ENCODE measurements at regions of chr5 and their contacts with region 1.

Region 1: GRCh38 chr5:177607452-177608192 is 7.7 kb downstream of the B4GALT7 start:
- DNase-seq: peak; percentile 86 to 92
- H3K4me3 ChIP-seq: no peak overlapping the region; a peak in 1 of 8 replicates
- H3K27ac ChIP-seq: peak overlapping the region; percentile 61; the same call in 1 of the 2 replicates
- H3K4me1 ChIP-seq: peaks cover 0 to 17% (median 10%) of the 10 kb centered on the region in 4 experiments; a peak in 5 of 7 replicates
- H3K27me3 ChIP-seq: no peaks in the 10 kb centered on the region
- CTCF ChIP-seq: peak in 2 of 3 experiments; percentile 79 to 94; a peak in 3 of 4 replicates
- EP300 ChIP-seq: no peak
- POLR2A ChIP-seq: 0 out of 3 replicates have a peak, but pooled peaks of 1 of the 2 experiments have one; percentile 56
- RAD21 ChIP-seq: peak; percentile 81 to 84

Region 2: GRCh38 chr5:177425801-177426565 is 181.6 kb before region 1 on chr5:
- CTCF ChIA-PET with region 1: no interaction called
- POLR2A ChIA-PET with region 1: no interaction called
- DNase-seq: peak; percentile 97 to 100
- H3K4me3 ChIP-seq: peak overlapping the region; percentile 52 to 71 (median 64)
- H3K27ac ChIP-seq: peak overlapping the region; percentile 86; the same call in 1 of the 2 replicates
- H3K4me1 ChIP-seq: peaks cover 4 to 14% (median 9%) of the 10 kb centered on the region in 4 experiments; a peak in 6 of 7 replicates
- H3K27me3 ChIP-seq: no peaks in the 10 kb centered on the region
- CTCF ChIP-seq: no peak
- EP300 ChIP-seq: peak in 1 of 2 experiments; percentile 69; a peak in 1 of 3 replicates
- POLR2A ChIP-seq: peak in 1 of 2 experiments; percentile 95; a peak in 2 of 3 replicates
- RAD21 ChIP-seq: no peak

Region 3: DNA sequence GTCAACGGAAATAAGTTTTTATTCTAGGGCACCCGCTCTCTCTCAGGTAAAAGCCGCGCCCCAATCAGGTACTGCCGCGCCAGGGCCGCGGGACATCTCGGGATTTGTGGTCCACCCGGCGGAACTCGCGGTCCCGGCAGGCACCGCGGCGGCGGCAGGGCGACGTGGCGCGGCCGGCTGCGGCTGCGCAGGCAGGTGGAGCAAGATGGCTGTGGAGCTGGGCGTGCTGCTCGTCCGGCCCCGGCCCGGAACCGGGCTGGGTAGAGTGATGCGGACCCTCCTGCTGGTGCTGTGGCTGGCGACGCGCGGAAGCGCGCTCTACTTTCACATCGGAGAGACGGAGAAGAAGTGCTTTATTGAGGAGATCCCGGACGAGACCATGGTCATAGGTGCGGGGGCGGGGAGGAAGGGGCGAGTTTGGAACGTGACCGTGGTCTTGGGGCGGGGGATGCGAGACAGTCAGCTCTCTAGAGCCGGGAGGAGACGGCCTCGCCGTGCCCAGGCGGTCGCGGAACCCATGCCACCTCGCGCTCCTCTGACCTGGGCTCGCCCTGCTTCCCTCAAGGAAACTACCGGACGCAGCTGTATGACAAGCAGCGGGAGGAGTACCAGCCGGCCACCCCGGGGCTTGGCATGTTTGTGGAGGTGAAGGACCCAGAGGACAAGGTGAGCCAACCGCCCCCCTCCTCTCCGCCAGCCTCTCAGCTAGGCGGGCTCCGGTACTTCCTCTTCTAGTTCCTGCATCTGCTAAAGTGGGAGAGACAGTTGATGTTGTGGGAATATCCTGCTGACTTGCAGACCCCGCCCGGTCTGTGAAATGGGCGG is 15.4 kb before region 1 on chr5 and contains the start of gene TMED9:
- CTCF ChIA-PET with region 1: interaction called, 14 read pairs
- POLR2A ChIA-PET with region 1: interaction called, 72 read pairs
- DNase-seq: peak; percentile 60 to 91
- H3K4me3 ChIP-seq: peak within 1 kb of the TSS; percentile 50 to 89 (median 82)
- H3K27ac ChIP-seq: peak within 1 kb of the TSS; percentile 58; the same call in 1 of the 2 replicates
- H3K4me1 ChIP-seq: no peaks in the 10 kb centered on the region
- H3K27me3 ChIP-seq: no peaks in the 10 kb centered on the region
- CTCF ChIP-seq: no peak
- EP300 ChIP-seq: no peak
- POLR2A ChIP-seq: peak; percentile 39 to 90
- RAD21 ChIP-seq: no peak
- total RNA-seq, gene TMED9: 156 and 160 TPM in 2 replicates

Measured in H1 (cell line).